ENCODE measurements at regions of chr16 and their contacts with region 1.

Region 1: DNA sequence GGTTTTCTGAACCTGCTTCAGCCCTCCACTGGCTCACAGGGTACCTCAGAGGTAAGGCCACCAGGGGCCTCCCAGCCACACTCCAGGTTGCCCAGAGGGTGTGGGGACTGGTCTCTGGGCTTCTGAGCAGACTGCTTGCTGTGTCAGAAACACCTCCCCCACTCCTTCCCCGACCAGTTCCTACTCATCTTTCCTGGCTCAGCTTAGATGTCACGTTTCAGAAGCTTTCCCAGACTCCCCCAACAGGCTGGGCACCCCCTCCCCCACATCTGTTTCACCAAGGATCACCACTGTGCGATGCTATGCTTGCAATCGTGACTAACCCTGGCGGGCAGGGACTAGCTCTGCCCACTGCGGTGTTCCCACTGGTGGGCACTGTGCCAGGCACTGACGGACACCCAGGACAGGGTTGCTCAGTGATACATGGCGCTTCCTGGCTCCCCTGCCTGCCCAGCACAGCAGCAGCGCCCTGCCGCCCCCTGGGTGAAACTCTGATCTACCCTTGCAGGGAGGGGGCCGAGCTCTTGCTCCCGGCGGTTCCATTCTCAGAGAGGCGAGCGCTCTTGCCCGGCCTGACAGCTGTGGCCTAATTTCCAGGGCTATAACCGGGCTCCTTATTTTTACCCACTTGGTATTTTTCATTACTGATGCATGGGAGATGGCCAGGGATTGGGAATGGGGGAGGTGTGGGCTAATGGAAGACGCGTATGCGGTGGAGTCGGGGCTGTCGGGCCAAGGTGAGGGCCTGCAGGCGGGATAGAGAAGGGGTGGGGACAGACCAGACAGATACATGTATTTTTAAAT is 29.4 kb upstream of the MTSS2 start:
- DNase-seq: peak; percentile 89
- H3K4me3 ChIP-seq: no peak overlapping the region
- CTCF ChIP-seq: no peak

Region 2: DNA sequence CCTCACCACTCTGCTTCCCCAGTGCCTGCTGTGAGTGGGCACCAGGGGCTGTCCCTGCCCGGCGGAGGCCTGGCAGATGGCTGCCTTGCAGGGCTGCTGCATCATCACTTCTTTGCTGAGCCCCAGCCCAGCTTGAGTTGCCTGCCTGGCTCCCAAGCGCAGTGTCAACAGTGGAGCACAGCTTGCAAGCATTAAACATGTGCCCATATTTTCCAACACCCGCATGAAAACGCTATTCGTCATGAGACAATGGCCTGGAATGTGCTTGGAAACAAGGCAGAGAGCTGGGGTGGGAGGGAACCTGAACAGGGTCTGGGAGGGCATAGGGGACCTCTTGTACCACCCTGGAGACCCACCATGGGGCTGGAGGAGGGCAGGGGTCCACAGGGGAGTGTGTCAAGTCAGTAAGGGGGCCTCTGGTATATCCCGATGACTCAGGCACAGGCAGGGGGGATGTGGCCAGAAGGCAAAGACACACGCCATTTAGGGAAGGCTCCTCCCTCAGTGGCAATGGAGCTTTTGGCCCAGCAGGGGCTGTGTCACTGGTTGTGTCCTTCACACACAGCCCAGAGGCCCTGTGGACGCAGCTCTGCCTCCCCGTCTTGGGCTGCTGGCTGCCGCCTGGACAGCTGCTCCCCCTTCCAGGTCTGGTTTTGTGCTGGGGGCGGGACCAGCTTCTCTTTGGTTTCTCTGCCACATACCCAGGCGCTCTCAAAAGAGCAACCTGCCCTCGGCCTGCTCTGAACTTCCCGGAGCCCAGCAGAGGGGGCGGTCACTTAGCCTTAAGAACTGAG is 12.0 kb before region 1 on chr16:
- CTCF ChIA-PET with region 1: interaction called, 13 read pairs
- POLR2A ChIA-PET with region 1: interaction called, 4 read pairs
- DNase-seq: peak; percentile 75
- H3K4me3 ChIP-seq: no peak overlapping the region
- CTCF ChIP-seq: peak; percentile 70

Measured in AG04449 (cell line).